ENCODE measurements at regions of chrX and their contacts with region 1.

Region 1: DNA sequence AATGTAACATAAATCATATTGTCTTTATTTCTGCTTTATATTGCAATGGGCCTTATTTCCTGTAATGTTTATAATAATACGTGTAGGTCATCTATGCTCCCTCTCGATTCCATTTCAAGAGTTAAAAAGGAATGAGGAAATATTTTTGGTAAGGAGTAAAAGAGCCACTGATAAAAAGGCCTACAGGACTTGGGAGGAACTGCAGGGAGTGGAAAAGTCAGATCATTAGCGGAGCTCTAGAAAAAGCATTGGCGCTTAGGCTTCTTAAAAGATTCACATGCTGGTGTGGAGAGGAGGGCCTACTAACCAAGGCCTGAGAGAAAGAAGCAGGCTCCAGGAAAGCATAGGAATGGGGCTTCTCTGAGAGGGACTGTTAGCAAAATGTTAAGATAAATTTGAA is 82.9 kb upstream of the PNPLA4 start:
- DNase-seq: no peak
- H3K4me3 ChIP-seq: no peak overlapping the region
- H3K4me3 Mint-ChIP-seq: no peak overlapping the region
- H3K27ac ChIP-seq: no peak overlapping the region
- H3K27ac Mint-ChIP-seq: no peak overlapping the region
- H3K4me1 ChIP-seq: no peaks in the 10 kb centered on the region
- H3K4me1 Mint-ChIP-seq: no peaks in the 10 kb centered on the region
- H3K27me3 ChIP-seq: no peaks in the 10 kb centered on the region
- H3K27me3 Mint-ChIP-seq: no peaks in the 10 kb centered on the region

Region 2: DNA sequence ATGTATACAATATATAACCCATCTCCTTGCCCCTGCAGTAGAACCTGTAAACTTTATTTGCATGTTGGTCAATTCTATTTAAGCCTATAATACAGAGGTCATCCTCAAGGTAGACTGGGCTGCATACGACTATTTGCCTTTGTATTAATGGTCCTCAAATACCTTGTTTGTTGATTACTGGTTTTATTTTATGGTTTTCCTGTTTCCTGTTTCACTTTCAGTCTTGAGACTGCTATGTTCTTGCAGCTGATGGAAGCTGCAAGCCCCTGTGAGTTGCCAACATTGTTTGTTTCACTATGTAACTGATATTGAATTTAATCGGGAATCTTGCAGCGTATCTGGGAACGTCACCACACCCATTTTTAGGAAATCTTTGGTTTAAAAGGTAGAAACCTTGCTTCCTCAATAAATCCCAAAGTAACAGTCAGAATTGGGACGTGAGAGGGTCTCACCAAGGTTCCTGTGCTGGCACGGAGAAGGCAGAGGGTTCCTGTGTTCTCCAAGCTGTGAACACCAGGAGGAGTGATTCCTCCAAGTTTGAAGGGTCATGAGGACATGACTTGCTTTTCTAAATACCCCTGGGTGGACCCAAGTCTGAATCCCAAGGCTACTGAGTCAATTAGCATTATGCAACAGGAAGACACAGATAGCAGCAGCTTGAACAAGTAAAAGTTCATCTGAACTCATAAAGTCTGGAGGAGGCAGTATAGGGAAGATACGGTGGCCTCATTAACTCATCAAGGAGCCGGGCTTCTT is 27.7 kb after region 1 on chrX:
- CTCF ChIA-PET with region 1: interaction called, 3 read pairs
- POLR2A ChIA-PET with region 1: no interaction called
- intact Hi-C with region 1: loop called (anchors 1 kb)
- DNase-seq: no peak
- H3K4me3 ChIP-seq: no peak overlapping the region
- H3K4me3 Mint-ChIP-seq: peak overlapping the region; percentile 67 to 89 (median 80)
- H3K27ac ChIP-seq: no peak overlapping the region
- H3K27ac Mint-ChIP-seq: peak overlapping the region; percentile 4 to 90 (median 78)
- H3K4me1 ChIP-seq: peaks cover 15% of the 10 kb centered on the region
- H3K4me1 Mint-ChIP-seq: peaks cover 8 to 25% (median 15%) of the 10 kb centered on the region in 4 donors
- H3K27me3 ChIP-seq: no peaks in the 10 kb centered on the region
- H3K27me3 Mint-ChIP-seq: peaks cover 0 to under 1% of the 10 kb centered on the region in 2 donors